Ovary (tissue), 10 donors: ENCODE measurements at regions of chr4 and their contacts with region 1.

Region 1: GRCh38 chr4:153083447-153083947 is 120.7 kb upstream of the TRIM2 start:
- DNase-seq: peak in 4 of 5 donors; percentile 23 to 40 (median 36)
- H3K4me3 ChIP-seq: no peak overlapping the region
- H3K27ac ChIP-seq: no peak overlapping the region
- H3K4me1 ChIP-seq: no peaks in the 10 kb centered on the region
- H3K27me3 ChIP-seq: no peaks in the 10 kb centered on the region
- CTCF ChIP-seq: peak in 2 of 3 donors; percentile 30
- EP300 ChIP-seq: no peak
- POLR2A ChIP-seq: no peak

Region 2: DNA sequence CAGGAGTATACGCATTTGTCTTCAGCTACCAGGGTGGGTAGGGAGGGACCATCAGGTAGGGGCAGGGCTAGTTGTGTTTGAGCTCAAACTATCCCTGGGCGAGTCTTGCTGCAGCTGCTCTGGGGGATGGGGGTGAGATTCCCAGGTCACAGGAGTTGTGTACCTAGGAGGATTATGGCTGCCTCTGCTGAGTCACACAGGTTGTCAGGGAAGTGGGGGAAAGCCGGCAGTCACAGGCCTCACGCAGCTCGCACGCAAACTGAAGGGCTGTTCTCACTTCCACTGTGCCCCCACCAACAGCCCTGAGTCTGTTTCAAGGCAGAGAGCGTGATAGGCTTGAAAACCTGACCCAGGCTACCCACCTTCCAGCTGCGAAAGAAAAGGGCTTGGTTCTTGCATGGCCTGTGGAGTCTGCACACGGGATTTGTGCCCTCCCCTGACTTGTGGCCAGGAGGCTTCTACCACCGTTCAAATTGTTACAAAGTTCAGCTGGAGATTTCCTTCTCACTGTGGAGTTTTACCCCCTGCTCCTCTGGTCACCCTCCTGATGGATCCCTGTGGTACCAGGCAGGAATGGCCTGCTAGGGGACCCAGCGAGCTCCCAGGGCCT is 239.9 kb before region 1 on chr4:
- intact Hi-C with region 1: loop called in 3 of 4 experiments (anchors 2 to 10 kb)
- DNase-seq: no peak
- H3K4me3 ChIP-seq: no peak overlapping the region
- H3K27ac ChIP-seq: no peak overlapping the region
- H3K4me1 ChIP-seq: no peaks in the 10 kb centered on the region
- H3K27me3 ChIP-seq: no peaks in the 10 kb centered on the region
- CTCF ChIP-seq: no peak
- EP300 ChIP-seq: no peak
- POLR2A ChIP-seq: no peak

Region 3: GRCh38 chr4:152850377-152850776 is 233.1 kb before region 1 on chr4:
- intact Hi-C with region 1: loop called (anchors 2 to 10 kb)
- DNase-seq: no peak
- H3K4me3 ChIP-seq: no peak overlapping the region
- H3K27ac ChIP-seq: no peak overlapping the region
- H3K4me1 ChIP-seq: no peaks in the 10 kb centered on the region
- H3K27me3 ChIP-seq: no peaks in the 10 kb centered on the region
- CTCF ChIP-seq: no peak
- EP300 ChIP-seq: no peak
- POLR2A ChIP-seq: no peak

Region 4: DNA sequence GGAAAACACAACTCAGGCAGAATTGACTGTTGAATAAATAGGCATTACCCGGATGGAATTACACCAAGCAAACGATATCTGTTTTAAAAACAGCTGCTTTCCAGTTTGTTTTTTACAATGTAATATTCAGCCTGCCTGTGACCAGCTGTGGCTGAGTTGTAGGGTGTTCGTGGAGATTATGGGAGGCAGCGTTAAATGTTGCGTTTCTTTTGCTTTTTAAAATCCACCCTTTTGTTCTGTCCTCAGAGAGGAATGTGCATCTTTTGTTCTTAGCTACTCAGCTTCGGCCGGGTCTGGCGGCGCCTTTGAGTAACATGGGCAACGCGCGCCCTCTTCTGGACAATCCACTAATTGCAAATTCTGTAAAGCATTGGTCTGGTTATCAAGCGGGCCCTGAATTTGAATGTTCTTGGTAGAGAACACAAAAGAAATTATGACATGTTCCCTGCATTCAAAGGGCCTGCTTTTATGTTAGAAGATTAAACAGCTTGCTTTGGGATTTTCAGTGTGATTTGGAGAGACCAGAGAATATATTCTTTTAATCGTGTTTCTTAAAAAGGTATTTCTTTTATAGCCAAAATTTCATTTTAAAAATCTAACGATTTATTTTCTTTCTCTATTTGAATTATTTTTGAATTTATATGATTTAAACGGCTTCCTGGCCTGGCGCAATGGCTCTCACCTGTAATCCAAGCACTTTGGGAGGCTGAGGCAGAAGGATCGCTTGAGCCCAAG is 44.4 kb after region 1 on chr4:
- intact Hi-C with region 1: loop called in 2 of 4 experiments (anchors 5 kb)
- DNase-seq: peak; percentile 75 to 86 (median 83)
- H3K4me3 ChIP-seq: no peak overlapping the region
- H3K27ac ChIP-seq: no peak overlapping the region
- H3K4me1 ChIP-seq: no peaks in the 10 kb centered on the region
- H3K27me3 ChIP-seq: no peaks in the 10 kb centered on the region
- CTCF ChIP-seq: peak; percentile 67 to 75 (median 69)
- EP300 ChIP-seq: no peak
- POLR2A ChIP-seq: no peak